ENCODE measurements at regions of chr6 and their contacts with region 1.

Region 1: GRCh38 chr6:5260661-5261544 is at the starts of genes FARS2 and LYRM4:
- DNase-seq: peak; percentile 99
- ATAC-seq: peak; percentile 81
- H3K4me3 ChIP-seq: peak within 1 kb of the TSS; percentile 77 to 96 (median 93)
- H3K4me3 Mint-ChIP-seq: peak within 1 kb of the TSS; percentile 92
- H3K27ac ChIP-seq: peak within 1 kb of the TSS; percentile 96 to 97
- H3K27ac Mint-ChIP-seq: peak within 1 kb of the TSS; percentile 99
- H3K4me1 ChIP-seq: peaks cover 15 to 23% of the 10 kb centered on the region in 2 donors
- H3K4me1 Mint-ChIP-seq: peaks cover 24% of the 10 kb centered on the region
- H3K27me3 ChIP-seq: no peaks in the 10 kb centered on the region
- H3K27me3 Mint-ChIP-seq: no peaks in the 10 kb centered on the region
- CTCF ChIP-seq: no peak
- total RNA-seq, gene FARS2: 35.5 TPM in 2 replicates
- total RNA-seq, gene LYRM4: 22.1 and 24.6 TPM in 2 replicates

Region 2: GRCh38 chr6:5003604-5004372 is 257.1 kb before region 1 on chr6 and contains the start of gene RPP40:
- CTCF ChIA-PET with region 1: interaction called, 3 read pairs
- POLR2A ChIA-PET with region 1: interaction called, 4 read pairs
- intact Hi-C with region 1: loop called (anchors 1 kb)
- DNase-seq: peak; percentile 99
- ATAC-seq: peak; percentile 92
- H3K4me3 ChIP-seq: peak within 1 kb of the TSS; percentile 70 to 82 (median 71)
- H3K4me3 Mint-ChIP-seq: peak within 1 kb of the TSS; percentile 98
- H3K27ac ChIP-seq: peak within 1 kb of the TSS; percentile 81 to 90
- H3K27ac Mint-ChIP-seq: peak within 1 kb of the TSS; percentile 99
- H3K4me1 ChIP-seq: peaks cover 6 to 14% of the 10 kb centered on the region in 2 donors
- H3K4me1 Mint-ChIP-seq: peaks cover 10% of the 10 kb centered on the region
- H3K27me3 ChIP-seq: no peaks in the 10 kb centered on the region
- H3K27me3 Mint-ChIP-seq: no peaks in the 10 kb centered on the region
- CTCF ChIP-seq: peak; percentile 82
- total RNA-seq, gene RPP40: 3.8 TPM in 2 replicates

Region 3: DNA sequence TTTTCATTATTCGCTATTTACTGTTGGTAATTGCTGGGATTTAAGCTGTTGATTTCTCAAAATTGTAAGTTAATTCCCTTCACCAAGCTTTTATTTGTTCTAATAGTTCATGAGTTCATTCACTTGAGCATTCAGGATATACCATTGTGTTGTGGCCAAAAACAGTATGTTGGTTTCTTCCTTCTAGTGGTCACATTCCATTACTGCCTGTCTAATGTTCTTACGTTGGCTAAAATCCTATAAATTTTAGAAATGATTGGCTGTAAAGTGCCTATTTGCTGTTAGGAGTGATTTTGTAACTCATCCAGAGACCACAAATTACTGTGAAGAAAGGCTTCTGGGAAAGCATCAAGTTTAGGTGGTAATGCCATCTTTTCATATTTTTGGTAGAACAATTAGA is 76.7 kb after region 1 on chr6:
- CTCF ChIA-PET with region 1: no interaction called
- POLR2A ChIA-PET with region 1: no interaction called
- intact Hi-C with region 1: loop called (anchors 2 kb)
- DNase-seq: no peak
- ATAC-seq: no peak
- H3K4me3 ChIP-seq: no peak overlapping the region
- H3K4me3 Mint-ChIP-seq: no peak overlapping the region
- H3K27ac ChIP-seq: no peak overlapping the region
- H3K27ac Mint-ChIP-seq: no peak overlapping the region
- H3K4me1 ChIP-seq: peaks cover 2 to 14% of the 10 kb centered on the region in 2 donors
- H3K4me1 Mint-ChIP-seq: peaks cover 39% of the 10 kb centered on the region
- H3K27me3 ChIP-seq: no peaks in the 10 kb centered on the region
- H3K27me3 Mint-ChIP-seq: no peaks in the 10 kb centered on the region
- CTCF ChIP-seq: no peak

Region 4: DNA sequence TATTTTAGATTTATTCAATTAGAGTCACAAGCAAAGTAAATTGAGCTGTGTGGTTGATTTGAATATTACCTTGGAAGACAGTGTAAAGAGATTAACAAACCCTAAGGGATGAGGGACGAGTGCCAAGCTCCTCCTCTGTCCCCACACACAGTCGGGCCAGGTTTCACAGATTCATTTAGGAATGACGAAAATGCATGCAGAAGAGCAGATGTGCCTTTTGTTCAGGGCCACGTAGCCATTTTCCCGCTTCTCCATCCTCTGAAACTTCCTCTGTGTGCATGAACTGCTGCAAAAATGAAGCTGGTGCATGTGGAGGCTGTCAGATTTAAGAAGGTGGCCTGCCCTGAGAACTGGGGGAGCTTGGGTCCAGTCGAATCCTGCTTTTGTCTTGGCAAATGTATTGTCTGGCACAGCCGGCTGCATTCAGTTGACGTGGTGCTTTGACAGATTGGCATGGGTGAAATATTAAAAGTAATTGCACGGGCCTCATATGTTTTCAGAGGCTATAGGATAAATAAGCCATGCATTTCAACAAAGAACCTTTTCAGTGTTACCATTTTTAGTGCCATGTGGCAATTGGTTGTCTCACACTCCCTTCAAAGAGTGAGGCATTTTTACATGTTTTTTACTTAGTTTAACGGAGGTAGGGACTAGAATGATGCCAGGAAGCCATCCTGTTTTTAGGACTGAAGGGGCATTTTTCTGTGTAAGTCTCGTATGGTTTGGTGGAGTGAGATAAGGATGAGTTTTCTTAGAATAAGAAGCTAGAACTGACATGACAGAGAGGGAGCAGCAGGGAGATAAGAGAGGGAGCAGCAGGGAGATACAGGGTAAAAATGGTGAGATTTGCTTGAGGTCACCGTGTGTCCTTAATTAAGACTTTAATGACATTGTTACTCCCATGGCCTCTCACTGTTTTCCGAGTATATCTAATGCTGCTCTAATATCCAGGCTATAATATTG is 384.7 kb after region 1 on chr6:
- CTCF ChIA-PET with region 1: no interaction called
- POLR2A ChIA-PET with region 1: no interaction called
- intact Hi-C with region 1: no loop called
- DNase-seq: no peak
- ATAC-seq: no peak
- H3K4me3 ChIP-seq: no peak overlapping the region
- H3K4me3 Mint-ChIP-seq: no peak overlapping the region
- H3K27ac ChIP-seq: no peak overlapping the region
- H3K27ac Mint-ChIP-seq: no peak overlapping the region
- H3K4me1 ChIP-seq: peaks cover 10% of the 10 kb centered on the region in 2 donors
- H3K4me1 Mint-ChIP-seq: peaks cover 18% of the 10 kb centered on the region
- H3K27me3 ChIP-seq: no peaks in the 10 kb centered on the region
- H3K27me3 Mint-ChIP-seq: no peaks in the 10 kb centered on the region
- CTCF ChIP-seq: no peak

Region 5: DNA sequence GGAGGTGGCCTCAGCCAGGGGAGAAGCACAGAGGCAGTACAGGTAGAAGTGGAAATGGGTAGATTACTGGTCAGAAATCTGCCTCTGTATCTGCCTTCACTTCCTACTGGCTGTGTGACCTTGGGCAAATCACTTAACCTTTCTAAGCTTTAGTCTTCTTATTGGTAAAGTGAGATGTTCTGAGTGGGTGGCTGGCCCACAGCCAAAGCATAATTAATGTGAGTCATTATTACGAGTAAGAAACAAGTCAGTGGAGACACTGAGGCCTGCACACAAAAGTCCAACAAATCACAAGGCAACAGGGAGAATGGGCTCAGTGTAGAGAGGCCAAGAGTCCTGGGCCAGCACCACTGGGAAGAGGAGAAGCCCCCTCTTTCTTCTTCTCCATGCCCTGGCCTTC is 706.7 kb after region 1 on chr6:
- CTCF ChIA-PET with region 1: no interaction called
- POLR2A ChIA-PET with region 1: no interaction called
- intact Hi-C with region 1: no loop called
- DNase-seq: no peak
- ATAC-seq: no peak
- H3K4me3 ChIP-seq: no peak overlapping the region
- H3K4me3 Mint-ChIP-seq: no peak overlapping the region
- H3K27ac ChIP-seq: no peak overlapping the region
- H3K27ac Mint-ChIP-seq: no peak overlapping the region
- H3K4me1 ChIP-seq: no peaks in the 10 kb centered on the region
- H3K4me1 Mint-ChIP-seq: peaks cover 2% of the 10 kb centered on the region
- H3K27me3 ChIP-seq: peaks cover 0 to 3% (median 2%) of the 10 kb centered on the region in 4 experiments
- H3K27me3 Mint-ChIP-seq: peaks cover 38% of the 10 kb centered on the region
- CTCF ChIP-seq: no peak

Measured in B cell (primary cell).